ENCODE measurements at regions of chr12 and their contacts with region 1.

Region 1: DNA sequence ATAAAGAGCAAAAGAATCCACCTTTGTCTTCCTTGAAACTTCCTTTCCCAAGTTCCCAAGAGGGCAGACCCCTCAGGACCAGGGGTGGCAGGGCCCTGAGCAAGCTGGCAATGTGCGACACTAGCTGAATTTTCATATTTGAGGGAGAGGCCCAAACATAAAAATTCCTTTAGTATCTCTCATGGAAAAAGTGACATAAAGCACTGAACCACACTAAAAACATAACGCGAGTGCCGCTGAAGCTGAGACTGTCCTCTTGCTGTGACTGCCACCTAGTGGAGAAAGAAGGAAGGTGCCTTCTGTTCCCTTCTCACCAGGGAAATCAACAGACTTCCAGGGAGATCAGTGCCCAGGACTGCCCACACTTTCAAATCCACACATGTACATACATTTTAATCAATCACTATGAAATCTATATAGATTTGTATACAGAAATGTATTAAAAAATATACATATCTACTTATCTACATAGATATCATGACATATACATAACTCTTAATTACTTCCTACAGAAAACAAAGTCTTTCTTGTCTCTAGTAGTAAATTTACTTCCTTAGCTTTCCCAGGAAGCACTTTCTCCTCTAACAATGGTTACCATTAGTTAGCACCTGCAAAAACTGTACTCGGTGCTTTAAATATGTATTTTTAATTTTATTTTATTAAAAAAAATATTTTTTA is 53.8 kb downstream of the SSH1 start:
- DNase-seq: peak in 4 of 5 donors; percentile 77 to 94 (median 86)
- H3K4me3 ChIP-seq: no peak overlapping the region
- H3K27ac ChIP-seq: peak overlapping the region; percentile 39 to 71
- H3K4me1 ChIP-seq: peaks cover 0 to 10% (median 7%) of the 10 kb centered on the region in 3 donors
- H3K27me3 ChIP-seq: no peaks in the 10 kb centered on the region
- CTCF ChIP-seq: peak; percentile 96

Region 2: GRCh38 chr12:108526482-108527165 is 276.9 kb before region 1 on chr12:
- intact Hi-C with region 1: no loop called
- DNase-seq: no peak
- H3K4me3 ChIP-seq: no peak overlapping the region
- H3K27ac ChIP-seq: no peak overlapping the region
- H3K4me1 ChIP-seq: no peaks in the 10 kb centered on the region
- H3K27me3 ChIP-seq: no peaks in the 10 kb centered on the region
- CTCF ChIP-seq: no peak

Region 3: GRCh38 chr12:108570743-108571608 is 232.6 kb before region 1 on chr12:
- intact Hi-C with region 1: loop called (anchors 10 kb)
- DNase-seq: peak in 1 of 5 donors; percentile 53
- H3K4me3 ChIP-seq: no peak overlapping the region
- H3K27ac ChIP-seq: no peak overlapping the region
- H3K4me1 ChIP-seq: peaks cover 0 to 18% (median 16%) of the 10 kb centered on the region in 3 donors
- H3K27me3 ChIP-seq: no peaks in the 10 kb centered on the region
- CTCF ChIP-seq: no peak

Region 4: DNA sequence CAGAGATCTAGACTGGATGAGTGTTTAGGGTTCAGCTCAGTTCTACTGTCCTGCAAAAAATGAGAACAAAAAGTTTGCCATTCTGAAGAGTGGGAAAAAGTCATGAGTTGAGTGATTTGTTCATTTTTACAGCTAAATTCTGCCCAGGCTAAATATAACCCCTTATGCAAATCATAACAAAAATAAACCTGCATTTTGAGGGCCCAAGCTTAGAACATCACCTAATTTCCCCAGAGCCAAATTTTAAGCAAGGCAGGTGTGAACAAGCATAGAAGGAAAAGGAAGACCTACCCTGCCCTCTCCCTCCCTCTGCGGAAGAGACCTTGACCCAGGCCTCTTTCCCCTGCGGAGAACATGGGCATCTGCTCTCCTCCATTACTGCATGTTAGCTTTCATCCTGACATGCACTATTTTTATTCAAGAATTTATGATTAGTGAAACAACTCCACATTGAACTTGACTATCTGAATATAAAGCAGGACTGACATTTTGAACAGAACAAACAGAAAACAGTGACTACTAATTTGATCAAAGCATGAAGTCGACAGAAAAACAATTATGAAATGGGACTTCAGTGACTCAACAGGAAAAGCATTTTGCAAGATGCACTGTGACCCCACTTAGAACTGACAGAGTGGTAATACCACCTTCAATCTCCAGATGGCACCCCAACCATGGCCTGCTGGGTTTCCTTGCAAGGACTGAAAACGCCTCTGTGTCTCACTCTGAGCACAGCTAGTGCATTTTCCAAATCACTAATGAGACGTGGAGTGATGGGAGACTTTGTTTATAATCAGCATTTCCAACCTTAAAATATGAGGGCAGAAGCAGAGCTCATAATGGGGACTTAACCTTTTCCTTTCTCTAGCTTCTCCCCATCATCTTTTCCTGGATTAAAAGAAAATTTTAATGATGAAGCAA is 139.0 kb before region 1 on chr12:
- intact Hi-C with region 1: loop called (anchors 10 kb)
- DNase-seq: peak; percentile 80 to 94 (median 86)
- H3K4me3 ChIP-seq: no peak overlapping the region
- H3K27ac ChIP-seq: peak overlapping the region; percentile 26 to 80
- H3K4me1 ChIP-seq: peaks cover 0 to 18% (median 9%) of the 10 kb centered on the region in 3 donors
- H3K27me3 ChIP-seq: no peaks in the 10 kb centered on the region
- CTCF ChIP-seq: peak; percentile 94

Region 5: GRCh38 chr12:108750526-108751402 is 52.8 kb before region 1 on chr12:
- intact Hi-C with region 1: no loop called
- DNase-seq: peak in 4 of 5 donors; percentile 24 to 87 (median 56)
- H3K4me3 ChIP-seq: no peak overlapping the region
- H3K27ac ChIP-seq: no peak overlapping the region
- H3K4me1 ChIP-seq: peaks cover 0 to 12% (median 0%) of the 10 kb centered on the region in 3 donors
- H3K27me3 ChIP-seq: no peaks in the 10 kb centered on the region
- CTCF ChIP-seq: no peak